Cardiac septum (tissue), 1 donor: ENCODE measurements at regions of chr22 and their contacts with region 1.

Region 1: GRCh38 chr22:23315341-23315917 is 135.1 kb downstream of the BCR start:
- DNase-seq: peak; percentile 79

Region 2: GRCh38 chr22:23385291-23386244 is 70.1 kb after region 1 on chr22:
- intact Hi-C with region 1: loop called (anchors 2 kb)
- DNase-seq: peak; percentile 91